ENCODE measurements at regions of chr9 and their contacts with region 1.

Region 1: DNA sequence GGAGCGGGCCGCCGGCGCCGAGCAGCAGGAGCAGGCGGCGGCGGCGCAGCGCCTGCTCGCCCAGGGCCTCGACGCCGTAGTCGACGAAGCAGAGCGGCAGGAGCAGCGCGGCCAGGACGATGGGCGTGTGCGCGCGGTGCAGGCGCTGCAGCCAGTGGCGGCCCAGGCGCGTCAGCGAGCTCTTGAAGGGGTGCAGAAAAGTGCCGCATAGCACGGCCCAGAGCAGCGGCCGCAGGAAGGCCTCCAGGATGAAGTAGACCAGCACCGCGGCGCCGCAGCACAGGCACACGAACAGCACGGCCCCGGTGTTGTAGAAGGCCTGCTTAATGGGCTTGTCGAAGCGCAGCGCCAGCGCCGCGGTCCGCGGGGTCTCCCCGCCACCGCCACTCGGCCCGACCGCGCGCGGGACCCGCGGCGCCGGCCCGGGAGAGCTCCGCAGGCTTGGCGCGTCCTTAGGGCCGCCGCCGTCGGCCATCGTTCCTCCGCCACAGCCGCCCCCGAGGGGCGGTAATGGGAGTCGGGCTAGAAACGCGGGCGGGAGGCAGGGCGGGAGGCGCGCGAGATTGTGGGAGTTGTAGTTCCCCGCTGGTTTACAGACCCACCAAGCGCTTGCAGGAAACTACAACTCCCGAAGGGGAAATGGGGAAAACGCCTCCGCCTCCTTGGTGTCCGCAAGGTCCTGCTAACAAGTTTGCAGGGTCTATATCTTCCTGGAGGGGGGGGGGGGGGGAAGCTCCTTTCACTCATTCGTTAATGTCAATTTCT is at the start of gene TMEM245:
- DNase-seq: peak; percentile 86

Region 2: DNA sequence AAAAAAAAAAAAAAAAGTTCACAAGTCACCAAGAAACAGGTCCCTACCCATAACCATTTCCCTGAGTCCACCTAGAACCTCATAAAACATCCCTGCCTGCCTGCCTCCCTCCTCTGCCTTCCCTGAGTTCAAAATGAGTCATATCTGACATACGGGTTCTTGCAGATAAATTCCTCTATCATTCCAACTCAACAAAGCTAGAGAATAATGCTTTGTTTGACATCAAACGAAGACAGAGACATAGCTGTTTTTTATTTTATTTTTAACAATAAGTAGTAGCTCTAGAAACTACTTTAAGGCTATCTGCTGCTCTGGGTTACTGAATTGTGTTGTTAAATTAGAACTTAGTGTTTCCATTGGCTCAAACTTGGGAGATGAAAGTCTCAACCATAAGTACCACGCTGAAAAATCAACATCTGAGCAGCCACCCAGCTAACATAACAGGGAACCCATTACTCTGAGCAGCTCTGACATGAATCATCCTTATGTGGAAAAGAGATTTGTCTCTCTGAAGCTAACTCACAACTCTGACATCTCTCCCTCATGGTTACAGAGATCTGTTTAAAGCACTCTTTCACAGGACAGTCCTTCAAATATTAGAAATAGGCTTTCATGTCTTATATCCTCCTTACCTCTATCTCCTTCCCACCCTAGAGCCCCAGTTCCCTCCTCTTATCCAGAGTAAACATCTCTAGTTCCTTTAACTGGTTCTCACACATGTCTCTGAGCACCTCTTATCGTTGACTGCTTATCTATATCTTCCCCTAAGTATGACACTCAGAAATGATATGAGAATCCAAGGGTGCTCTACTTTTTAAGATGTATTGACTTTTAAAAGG is 12.0 kb before region 1 on chr9:
- CTCF ChIA-PET with region 1: no interaction called
- POLR2A ChIA-PET with region 1: interaction called, 29 read pairs
- DNase-seq: no peak

Region 3: DNA sequence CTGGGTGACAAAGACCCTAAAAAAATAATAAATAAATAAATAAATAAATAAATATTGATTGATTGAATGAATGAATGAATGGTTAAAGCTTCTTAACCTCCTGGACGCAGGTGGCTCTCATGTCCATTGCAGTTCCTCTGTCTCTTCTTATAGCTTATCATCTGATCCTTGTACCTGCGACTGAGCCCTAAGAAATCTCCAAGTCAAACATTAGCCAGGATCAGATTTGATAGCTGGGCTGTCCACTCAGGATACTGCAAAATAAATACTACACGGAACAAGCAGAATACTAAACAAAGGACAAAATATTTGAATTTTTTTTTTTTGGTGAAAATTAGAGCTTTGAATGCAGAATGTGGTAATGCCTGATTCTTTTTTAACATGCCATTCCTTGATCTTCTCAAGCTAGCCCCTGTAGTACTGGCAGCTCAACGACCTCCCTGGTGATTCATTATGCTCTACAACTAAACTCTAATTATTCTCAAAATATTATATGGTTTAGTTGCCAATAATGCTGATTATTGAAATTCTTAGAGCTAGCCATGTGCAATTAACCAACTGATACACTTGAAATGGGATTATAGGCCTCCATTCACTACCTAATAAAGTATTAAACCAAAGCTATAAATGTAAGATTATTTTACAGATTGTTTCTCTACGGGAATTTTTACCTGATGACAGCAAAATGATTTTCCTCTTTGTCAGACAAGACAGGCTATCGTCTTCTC is 10.0 kb after region 1 on chr9:
- CTCF ChIA-PET with region 1: interaction called, 3 read pairs
- POLR2A ChIA-PET with region 1: interaction called, 11 read pairs
- DNase-seq: no peak

Region 4: GRCh38 chr9:109311731-109312130 is 192.1 kb after region 1 on chr9:
- CTCF ChIA-PET with region 1: no interaction called
- POLR2A ChIA-PET with region 1: no interaction called
- DNase-seq: no peak

Region 5: GRCh38 chr9:109463924-109464625 is 344.5 kb after region 1 on chr9:
- CTCF ChIA-PET with region 1: no interaction called
- POLR2A ChIA-PET with region 1: no interaction called
- DNase-seq: no peak

Measured in HEK293T (cell line).